ENCODE measurements at regions of chr18 and their contacts with region 1.

Region 1: DNA sequence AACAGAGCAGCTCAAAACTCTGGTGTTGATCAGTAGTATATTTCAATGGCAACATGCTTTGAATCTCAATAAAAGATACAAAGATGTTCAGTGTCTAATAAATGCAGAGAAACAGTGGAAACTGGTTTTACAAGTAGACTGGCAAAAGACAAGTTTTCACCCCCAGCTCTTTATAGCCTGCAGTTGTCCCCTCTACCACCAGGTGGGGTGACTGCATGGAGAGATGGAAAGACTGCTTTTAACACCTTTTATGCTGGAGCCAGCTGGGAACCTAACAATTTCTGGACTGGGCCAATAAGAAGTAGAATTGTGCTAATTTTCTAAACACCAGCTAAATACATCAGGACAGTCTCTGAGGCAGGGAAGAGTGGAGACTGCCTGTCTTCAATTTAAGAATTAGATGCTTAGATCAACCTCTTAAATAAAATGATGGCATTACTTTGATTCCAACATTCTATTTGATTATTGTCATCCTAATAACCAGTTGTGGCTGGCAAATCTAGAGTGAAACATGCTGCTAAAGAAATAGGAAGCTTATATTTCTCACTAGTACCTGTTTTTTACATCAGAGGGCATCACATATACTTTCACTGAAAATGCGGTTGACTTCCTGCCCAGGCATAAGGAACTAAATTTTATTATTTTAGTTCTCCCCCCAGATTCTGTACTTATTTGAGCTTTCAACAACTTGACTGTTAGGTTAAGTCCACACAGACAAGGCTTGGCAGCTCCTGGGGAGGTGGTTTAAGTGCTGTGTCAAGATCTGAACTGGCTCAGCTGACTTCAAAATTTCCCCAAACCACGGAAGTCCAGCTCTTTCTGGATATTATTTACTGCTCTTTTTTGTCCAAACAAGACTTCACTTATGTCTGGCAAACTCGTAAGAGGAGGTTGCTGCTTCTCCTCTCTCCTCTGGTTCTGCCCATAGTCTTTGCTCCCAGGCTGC is 140.5 kb downstream of the TPGS2 start:
- DNase-seq: peak; percentile 44
- H3K4me3 ChIP-seq: no peak overlapping the region
- H3K27ac ChIP-seq: no peak overlapping the region
- H3K27me3 ChIP-seq: no peaks in the 10 kb centered on the region
- CTCF ChIP-seq: peak; percentile 98

Region 2: DNA sequence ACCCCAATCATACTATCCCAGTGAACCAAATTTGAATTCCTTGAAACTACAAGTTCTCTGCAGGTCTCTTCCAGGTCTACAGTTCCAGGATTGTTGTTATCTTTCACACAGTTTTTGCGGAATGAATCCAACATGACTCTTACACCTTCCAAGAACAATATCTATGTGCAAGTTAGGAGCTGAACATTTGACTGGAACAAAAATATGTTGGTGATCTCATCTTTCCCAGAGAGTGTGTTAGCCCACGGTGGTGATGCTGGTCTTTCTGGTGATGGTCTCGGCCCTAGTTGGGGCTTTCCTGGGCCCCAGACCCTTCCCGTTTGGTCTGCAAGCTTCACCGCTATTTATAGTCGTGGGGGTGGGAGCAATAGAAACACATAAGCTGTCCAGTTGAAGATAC is 33.2 kb before region 1 on chr18:
- CTCF ChIA-PET with region 1: interaction called, 19 read pairs
- POLR2A ChIA-PET with region 1: no interaction called
- DNase-seq: no peak
- H3K4me3 ChIP-seq: no peak overlapping the region
- H3K27ac ChIP-seq: no peak overlapping the region
- H3K27me3 ChIP-seq: no peaks in the 10 kb centered on the region
- CTCF ChIP-seq: no peak

Region 3: GRCh38 chr18:36711813-36712444 is 23.6 kb after region 1 on chr18:
- CTCF ChIA-PET with region 1: interaction called, 25 read pairs
- POLR2A ChIA-PET with region 1: interaction called, 4 read pairs
- DNase-seq: peak; percentile 62
- H3K4me3 ChIP-seq: no peak overlapping the region
- H3K27ac ChIP-seq: no peak overlapping the region
- H3K27me3 ChIP-seq: no peaks in the 10 kb centered on the region
- CTCF ChIP-seq: no peak

Region 4: DNA sequence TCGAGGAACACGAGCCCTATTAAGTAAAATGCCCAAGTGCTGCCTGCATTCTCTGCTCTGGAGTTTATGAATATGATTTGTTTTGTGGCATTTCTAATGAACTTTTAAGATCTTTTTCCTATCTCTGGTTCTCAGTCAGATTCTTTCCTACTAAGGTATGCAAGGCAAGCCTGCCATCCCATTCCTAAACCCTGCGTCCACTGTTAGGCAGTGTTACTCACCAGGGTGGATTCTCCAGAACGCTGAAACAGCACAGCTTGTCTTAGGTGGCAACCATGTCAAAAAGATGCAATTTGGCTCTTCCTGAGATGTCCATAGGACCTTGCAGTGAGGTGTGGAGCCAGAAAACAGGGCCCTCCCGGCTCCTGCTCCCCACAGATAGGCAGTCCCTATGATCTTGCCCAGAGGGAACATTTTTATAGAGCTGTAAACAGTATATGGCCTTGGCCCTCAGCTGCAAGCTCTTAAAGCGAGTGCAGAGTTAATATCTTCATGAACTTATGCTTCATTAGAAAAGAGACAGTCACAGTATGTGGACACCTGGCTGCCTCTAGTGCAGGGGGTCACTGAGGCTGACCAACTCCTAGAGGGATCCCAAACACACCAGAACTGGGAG is 56.1 kb after region 1 on chr18:
- CTCF ChIA-PET with region 1: interaction called, 13 read pairs
- POLR2A ChIA-PET with region 1: no interaction called
- DNase-seq: peak; percentile 27
- H3K4me3 ChIP-seq: no peak overlapping the region
- H3K27ac ChIP-seq: peak overlapping the region; percentile 31
- H3K27me3 ChIP-seq: no peaks in the 10 kb centered on the region
- CTCF ChIP-seq: no peak

Region 5: DNA sequence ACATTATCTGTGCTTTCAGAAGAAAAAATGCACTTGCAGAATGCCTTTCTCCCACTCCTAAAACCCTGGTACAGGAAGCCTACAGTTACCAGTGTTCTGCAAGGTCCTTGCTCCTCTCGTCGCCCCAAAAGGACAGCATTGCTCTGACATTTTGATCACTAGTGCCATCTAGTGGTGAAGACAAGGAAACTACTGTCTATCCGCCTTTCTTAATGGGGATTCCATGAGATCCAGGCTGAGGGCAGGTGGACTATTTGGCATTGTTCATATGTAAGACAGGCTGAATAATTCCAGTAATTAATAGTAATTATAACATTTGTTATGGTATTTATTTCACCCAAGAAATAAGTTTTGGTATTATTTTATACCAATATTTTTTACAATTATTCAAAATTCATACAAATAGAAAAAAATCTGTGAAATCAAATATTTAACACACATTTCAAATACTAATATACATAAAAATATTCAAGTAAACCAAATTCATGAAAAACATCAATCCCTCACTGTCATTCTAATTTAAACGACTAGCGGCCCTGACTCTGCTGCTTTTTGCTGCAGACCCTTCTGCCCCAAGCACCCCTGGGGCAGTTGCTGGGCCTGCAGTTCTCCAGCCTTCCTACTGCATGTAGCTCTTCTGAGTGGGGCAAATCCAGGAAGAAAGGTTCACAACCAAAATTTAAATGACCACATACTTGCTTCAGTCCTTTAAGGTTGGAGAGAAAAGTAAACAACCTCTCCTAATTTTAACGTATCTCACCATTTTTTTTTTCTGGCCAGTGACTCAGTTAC is 121.5 kb after region 1 on chr18:
- CTCF ChIA-PET with region 1: interaction called, 17 read pairs
- POLR2A ChIA-PET with region 1: no interaction called
- DNase-seq: no peak
- H3K4me3 ChIP-seq: no peak overlapping the region
- H3K27ac ChIP-seq: no peak overlapping the region
- H3K27me3 ChIP-seq: no peaks in the 10 kb centered on the region
- CTCF ChIP-seq: peak; percentile 82